PC-9 (cell line): ENCODE measurements at regions of chr9 and their contacts with region 1.

Region 1: GRCh38 chr9:17425384-17425783 is 153.5 kb upstream of the SH3GL2 start:
- DNase-seq: no peak
- H3K4me3 ChIP-seq: no peak overlapping the region
- H3K27ac ChIP-seq: no peak overlapping the region
- H3K4me1 ChIP-seq: no peaks in the 10 kb centered on the region
- H3K27me3 ChIP-seq: no peaks in the 10 kb centered on the region
- CTCF ChIP-seq: no peak

Region 2: GRCh38 chr9:17349831-17350230 is 75.6 kb before region 1 on chr9:
- CTCF ChIA-PET with region 1: no interaction called
- POLR2A ChIA-PET with region 1: no interaction called
- intact Hi-C with region 1: no loop called
- DNase-seq: no peak
- H3K4me3 ChIP-seq: no peak overlapping the region
- H3K27ac ChIP-seq: no peak overlapping the region
- H3K4me1 ChIP-seq: no peaks in the 10 kb centered on the region
- H3K27me3 ChIP-seq: no peaks in the 10 kb centered on the region
- CTCF ChIP-seq: no peak

Region 3: DNA sequence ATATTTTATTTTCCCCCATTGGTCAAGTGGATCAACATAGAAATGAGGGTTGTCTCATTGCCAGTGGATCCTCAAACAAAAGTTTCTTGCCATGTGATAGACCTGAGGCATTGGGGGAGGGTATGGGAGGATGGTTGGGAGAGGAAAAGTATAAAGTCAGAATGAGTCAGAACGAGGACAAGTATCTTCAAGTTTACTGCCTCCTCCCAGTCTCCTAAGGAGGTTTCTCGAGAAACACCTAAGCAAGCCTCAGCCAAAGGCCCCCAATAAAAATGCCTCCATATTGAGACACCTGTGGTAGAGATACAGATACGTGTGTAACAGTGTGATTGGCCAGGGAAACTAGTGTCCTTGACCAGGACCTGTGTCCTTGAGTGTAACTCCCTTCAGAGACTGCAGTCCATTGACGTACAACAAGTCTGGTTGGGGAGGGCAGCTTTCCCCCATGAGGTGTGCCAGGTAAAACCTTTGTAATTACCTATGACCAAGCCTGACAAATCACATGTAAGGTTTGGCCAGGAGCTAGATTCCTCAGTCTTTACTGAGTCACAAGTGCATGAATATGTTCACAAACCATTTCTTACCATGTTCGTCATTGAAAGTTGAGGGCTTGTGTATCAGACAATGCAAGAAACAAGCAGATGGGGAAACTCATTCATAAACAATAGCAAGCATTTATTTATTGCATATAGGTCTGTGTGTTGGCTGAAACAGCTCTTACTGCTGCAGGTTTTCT is 45.1 kb before region 1 on chr9:
- CTCF ChIA-PET with region 1: no interaction called
- POLR2A ChIA-PET with region 1: interaction called, 10 read pairs
- intact Hi-C with region 1: no loop called
- DNase-seq: no peak
- H3K4me3 ChIP-seq: no peak overlapping the region
- H3K27ac ChIP-seq: no peak overlapping the region
- H3K4me1 ChIP-seq: no peaks in the 10 kb centered on the region
- H3K27me3 ChIP-seq: no peaks in the 10 kb centered on the region
- CTCF ChIP-seq: no peak